T-cell (primary cell): ENCODE measurements at regions of chr9 and their contacts with region 1.

Region 1: GRCh38 chr9:72271613-72272478 is 93.2 kb downstream of the ZFAND5 start:
- DNase-seq: peak in 24 of 35 experiments; percentile 2 to 71 (median 22)
- ATAC-seq: peak in 3 of 4 experiments; percentile 53 to 57 (median 56)
- H3K4me3 ChIP-seq: no peak overlapping the region
- H3K4me3 Mint-ChIP-seq: no peak overlapping the region
- H3K27ac ChIP-seq: no peak overlapping the region
- H3K27ac Mint-ChIP-seq: no peak overlapping the region
- H3K4me1 ChIP-seq: no peaks in the 10 kb centered on the region
- H3K4me1 Mint-ChIP-seq: no peaks in the 10 kb centered on the region
- H3K27me3 ChIP-seq: no peaks in the 10 kb centered on the region
- H3K27me3 Mint-ChIP-seq: peaks cover 4 to 6% of the 10 kb centered on the region in 2 donors

Region 2: GRCh38 chr9:72038890-72039410 is 232.9 kb before region 1 on chr9:
- CTCF ChIA-PET with region 1: interaction called, 4 to 20 read pairs
- POLR2A ChIA-PET with region 1: no interaction called
- DNase-seq: peak; percentile 2 to 75 (median 40)
- ATAC-seq: peak; percentile 56 to 67 (median 62)
- H3K4me3 ChIP-seq: no peak overlapping the region
- H3K4me3 Mint-ChIP-seq: no peak overlapping the region
- H3K27ac ChIP-seq: no peak overlapping the region
- H3K27ac Mint-ChIP-seq: no peak overlapping the region
- H3K4me1 ChIP-seq: peaks cover 0 to 7% of the 10 kb centered on the region in 2 experiments
- H3K4me1 Mint-ChIP-seq: peaks cover 4 to 8% (median 5%) of the 10 kb centered on the region in 3 donors
- H3K27me3 ChIP-seq: peaks cover 0 to 12% of the 10 kb centered on the region in 2 experiments
- H3K27me3 Mint-ChIP-seq: peaks cover 12 to 18% of the 10 kb centered on the region in 2 donors